Activated naive CD4-positive, alpha-beta T cell treated with anti-CD3 and anti-CD28 coated beads for 36 hours (primary cell): ENCODE measurements at regions of chr15 and their contacts with region 1.

Region 1: GRCh38 chr15:69413822-69414700 is at the start of gene KIF23:
- DNase-seq: peak; percentile 95
- H3K4me3 Mint-ChIP-seq: peak within 1 kb of the TSS; percentile 84
- H3K27ac Mint-ChIP-seq: peak within 1 kb of the TSS; percentile 19
- H3K4me1 Mint-ChIP-seq: peaks cover 11% of the 10 kb centered on the region
- H3K27me3 Mint-ChIP-seq: peaks cover 18% of the 10 kb centered on the region
- total RNA-seq, gene KIF23: 68.8 to 73.1 TPM

Region 2: GRCh38 chr15:68783226-68784058 is 630.6 kb before region 1 on chr15:
- CTCF ChIA-PET with region 1: no interaction called
- intact Hi-C with region 1: loop called (anchors 10 kb)
- DNase-seq: peak; percentile 71
- H3K4me3 Mint-ChIP-seq: no peak overlapping the region
- H3K27ac Mint-ChIP-seq: peak overlapping the region; percentile 81
- H3K4me1 Mint-ChIP-seq: peaks cover 39% of the 10 kb centered on the region
- H3K27me3 Mint-ChIP-seq: no peaks in the 10 kb centered on the region

Region 3: GRCh38 chr15:69160141-69160993 is 253.7 kb before region 1 on chr15 and contains the start of gene GLCE:
- CTCF ChIA-PET with region 1: no interaction called
- intact Hi-C with region 1: loop called (anchors 1 kb)
- DNase-seq: peak; percentile 94
- H3K4me3 Mint-ChIP-seq: peak within 1 kb of the TSS; percentile 88
- H3K27ac Mint-ChIP-seq: peak within 1 kb of the TSS; percentile 62
- H3K4me1 Mint-ChIP-seq: peaks cover 18% of the 10 kb centered on the region
- H3K27me3 Mint-ChIP-seq: peaks cover 3% of the 10 kb centered on the region
- total RNA-seq, gene GLCE: 2.5 to 2.6 TPM

Region 4: DNA sequence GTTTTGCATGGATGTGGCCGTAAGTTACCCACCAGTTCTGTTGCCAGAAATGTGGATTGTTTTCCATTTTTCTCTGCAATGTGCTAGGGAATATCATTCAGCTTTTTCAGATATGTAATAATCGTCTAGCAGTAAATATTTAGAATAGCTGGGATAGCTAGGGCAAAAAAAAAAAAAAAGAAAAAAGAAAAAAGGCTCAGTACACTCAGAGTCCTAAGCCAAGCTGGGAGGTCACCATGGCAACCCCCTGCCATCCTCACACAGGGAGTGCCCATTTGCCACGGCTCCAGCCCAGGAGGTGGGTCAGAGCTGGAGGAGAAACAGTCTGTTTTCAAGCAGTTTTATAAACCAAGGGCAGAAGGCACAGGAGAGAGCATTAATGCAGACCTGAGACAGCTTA is 90.1 kb before region 1 on chr15:
- CTCF ChIA-PET with region 1: no interaction called
- intact Hi-C with region 1: loop called (anchors 5 kb)
- DNase-seq: no peak
- H3K4me3 Mint-ChIP-seq: no peak overlapping the region
- H3K27ac Mint-ChIP-seq: no peak overlapping the region
- H3K4me1 Mint-ChIP-seq: peaks cover 20% of the 10 kb centered on the region
- H3K27me3 Mint-ChIP-seq: peaks cover 12% of the 10 kb centered on the region

Region 5: DNA sequence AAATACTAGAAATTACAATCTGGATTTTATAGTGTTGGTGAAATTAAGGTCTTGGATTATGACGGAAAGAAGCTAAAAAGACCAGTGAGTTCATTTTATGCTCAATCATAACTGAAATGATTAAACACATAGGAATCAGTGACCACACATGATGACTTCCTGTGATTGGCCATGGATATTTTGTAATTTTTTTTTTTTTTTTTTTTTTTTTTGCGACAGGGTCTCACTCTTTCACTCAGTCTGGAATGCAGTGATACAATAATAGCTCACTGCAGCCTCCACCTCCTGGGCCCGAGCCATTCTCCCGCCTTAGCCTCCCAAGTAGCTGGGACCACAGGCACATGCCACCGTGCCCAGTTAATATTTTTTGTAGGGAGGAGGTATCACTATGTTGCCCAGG is 67.9 kb before region 1 on chr15:
- CTCF ChIA-PET with region 1: no interaction called
- intact Hi-C with region 1: no loop called
- DNase-seq: no peak
- H3K4me3 Mint-ChIP-seq: no peak overlapping the region
- H3K27ac Mint-ChIP-seq: no peak overlapping the region
- H3K4me1 Mint-ChIP-seq: no peaks in the 10 kb centered on the region
- H3K27me3 Mint-ChIP-seq: no peaks in the 10 kb centered on the region

Region 6: DNA sequence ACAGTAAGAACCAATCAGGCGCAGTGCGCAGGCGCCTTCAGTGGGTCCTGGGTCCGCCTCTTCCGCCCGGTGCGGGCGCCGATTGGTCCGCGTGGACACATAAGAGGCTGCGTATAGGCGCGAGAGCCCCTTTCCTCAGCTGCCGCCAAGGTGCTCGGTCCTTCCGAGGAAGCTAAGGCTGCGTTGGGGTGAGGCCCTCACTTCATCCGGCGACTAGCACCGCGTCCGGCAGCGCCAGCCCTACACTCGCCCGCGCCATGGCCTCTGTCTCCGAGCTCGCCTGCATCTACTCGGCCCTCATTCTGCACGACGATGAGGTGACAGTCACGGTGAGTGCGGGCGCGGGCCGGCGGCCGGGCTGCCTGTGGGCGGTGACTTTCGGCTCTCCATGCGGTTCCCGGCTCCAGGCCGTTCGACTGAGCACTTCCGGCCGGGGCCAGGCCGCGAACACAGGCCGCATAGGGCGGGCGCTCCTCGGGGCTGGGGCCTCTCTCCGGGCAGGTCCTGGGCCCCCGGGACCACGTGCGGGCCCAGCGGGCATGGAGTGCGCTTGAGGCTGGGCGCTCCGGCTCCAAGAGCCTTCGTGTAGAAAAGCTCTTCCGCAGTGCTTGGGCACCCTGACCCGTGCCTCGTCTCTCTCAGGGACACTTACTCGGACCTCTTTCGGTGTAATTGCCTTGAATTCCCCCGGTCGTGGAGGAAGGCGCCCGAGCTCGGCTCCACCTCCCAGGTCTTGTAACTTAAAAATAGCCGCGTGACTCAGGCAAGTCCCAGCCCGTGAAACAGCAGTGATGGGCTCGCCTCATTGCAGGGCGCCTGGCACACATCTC is 38.8 kb after region 1 on chr15 and contains the start of gene RPLP1:
- CTCF ChIA-PET with region 1: no interaction called
- intact Hi-C with region 1: loop called (anchors 1 kb)
- DNase-seq: peak; percentile 95
- H3K4me3 Mint-ChIP-seq: peak within 1 kb of the TSS; percentile 99
- H3K27ac Mint-ChIP-seq: peak within 1 kb of the TSS; percentile 99
- H3K4me1 Mint-ChIP-seq: peaks cover 27% of the 10 kb centered on the region
- H3K27me3 Mint-ChIP-seq: no peaks in the 10 kb centered on the region
- total RNA-seq, gene RPLP1: 2,674 to 2,950 TPM